OCI-LY7 (cell line): ENCODE measurements at regions of chr22 and their contacts with region 1.

Region 1: GRCh38 chr22:35861451-35861850 is 143.8 kb downstream of the APOL5 start:
- DNase-seq: peak; percentile 84
- H3K4me3 ChIP-seq: peak overlapping the region; percentile 47
- H3K27ac ChIP-seq: peak overlapping the region; percentile 99
- H3K4me1 ChIP-seq: peaks cover 100% of the 10 kb centered on the region
- CTCF ChIP-seq: no peak

Region 2: DNA sequence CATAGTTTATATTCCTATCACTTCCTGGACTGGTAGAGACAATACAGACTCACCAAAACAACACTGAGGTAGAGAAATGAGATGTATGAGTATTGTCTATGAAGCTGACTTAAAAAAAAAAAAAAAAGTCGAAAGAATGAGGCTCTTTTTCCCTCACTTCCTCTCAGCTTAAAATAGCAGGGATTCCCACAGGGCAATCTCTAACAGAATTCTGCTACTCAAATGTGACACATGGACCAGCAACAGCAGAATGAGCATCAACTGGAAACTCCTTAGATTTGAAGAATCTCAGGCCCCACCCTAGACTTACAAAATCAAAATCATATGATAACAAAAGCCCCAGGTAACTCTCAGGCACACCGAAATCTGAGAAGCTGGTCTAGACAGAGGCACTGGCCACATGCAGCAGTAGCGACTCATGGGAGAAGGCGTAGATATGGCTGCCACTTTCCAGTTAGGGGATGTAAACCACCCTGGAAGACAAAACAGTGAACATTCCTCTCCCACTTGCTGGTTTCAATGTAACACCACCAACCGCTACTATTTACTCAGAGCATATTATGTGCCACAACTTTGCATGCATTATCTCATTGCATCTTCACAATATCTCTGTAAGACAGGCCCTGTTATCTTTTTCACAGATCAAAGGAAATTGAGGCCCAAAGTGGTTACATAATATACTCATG is 39.2 kb after region 1 on chr22:
- CTCF ChIA-PET with region 1: no interaction called
- POLR2A ChIA-PET with region 1: interaction called, 7 read pairs
- intact Hi-C with region 1: loop called (anchors 2 kb)
- DNase-seq: no peak
- H3K4me3 ChIP-seq: peak overlapping the region; percentile 29
- H3K27ac ChIP-seq: peak overlapping the region; percentile 78
- H3K4me1 ChIP-seq: peaks cover 86% of the 10 kb centered on the region
- CTCF ChIP-seq: no peak